ENCODE measurements at regions of chr5 and their contacts with region 1.

Region 1: GRCh38 chr5:43120720-43121564 is at the start of gene ZNF131:
- DNase-seq: peak; percentile 95 to 99 (median 97)
- ATAC-seq: peak; percentile 87
- H3K4me3 ChIP-seq: peak within 1 kb of the TSS; percentile 74 to 82
- H3K4me3 Mint-ChIP-seq: peak within 1 kb of the TSS; percentile 96
- H3K27ac ChIP-seq: peak within 1 kb of the TSS; percentile 87 to 98
- H3K27ac Mint-ChIP-seq: peak within 1 kb of the TSS; percentile 98
- H3K4me1 ChIP-seq: peaks cover 34% of the 10 kb centered on the region
- H3K4me1 Mint-ChIP-seq: peaks cover 39% of the 10 kb centered on the region
- H3K27me3 ChIP-seq: no peaks in the 10 kb centered on the region
- H3K27me3 Mint-ChIP-seq: no peaks in the 10 kb centered on the region
- CTCF ChIP-seq: no peak
- total RNA-seq, gene ZNF131: 76.7 to 84.9 TPM

Region 2: GRCh38 chr5:41869739-41870626 is 1251.0 kb before region 1 on chr5 and contains the start of gene OXCT1:
- CTCF ChIA-PET with region 1: no interaction called
- POLR2A ChIA-PET with region 1: interaction called, 4 read pairs
- intact Hi-C with region 1: loop called in 1 of 2 experiments (anchors 10 kb)
- DNase-seq: peak; percentile 87 to 97 (median 93)
- ATAC-seq: peak; percentile 94
- H3K4me3 ChIP-seq: peak within 1 kb of the TSS; percentile 90 to 98
- H3K4me3 Mint-ChIP-seq: peak within 1 kb of the TSS; percentile 92
- H3K27ac ChIP-seq: peak within 1 kb of the TSS; percentile 87 to 90
- H3K27ac Mint-ChIP-seq: peak within 1 kb of the TSS; percentile 98
- H3K4me1 ChIP-seq: peaks cover 24% of the 10 kb centered on the region
- H3K4me1 Mint-ChIP-seq: peaks cover 48% of the 10 kb centered on the region
- H3K27me3 ChIP-seq: no peaks in the 10 kb centered on the region
- H3K27me3 Mint-ChIP-seq: no peaks in the 10 kb centered on the region
- CTCF ChIP-seq: no peak
- total RNA-seq, gene OXCT1: 16.1 to 19.8 TPM

Region 3: GRCh38 chr5:42950440-42951292 is 170.3 kb before region 1 on chr5:
- CTCF ChIA-PET with region 1: interaction called, 7 read pairs
- POLR2A ChIA-PET with region 1: interaction called, 32 read pairs
- intact Hi-C with region 1: loop called (anchors 1 kb)
- DNase-seq: peak; percentile 26 to 90 (median 72)
- ATAC-seq: peak; percentile 43
- H3K4me3 ChIP-seq: peak overlapping the region; percentile 72 to 83
- H3K4me3 Mint-ChIP-seq: peak overlapping the region; percentile 94
- H3K27ac ChIP-seq: peak overlapping the region; percentile 93 to 94
- H3K27ac Mint-ChIP-seq: peak overlapping the region; percentile 99
- H3K4me1 ChIP-seq: peaks cover 20% of the 10 kb centered on the region
- H3K4me1 Mint-ChIP-seq: peaks cover 34% of the 10 kb centered on the region
- H3K27me3 ChIP-seq: no peaks in the 10 kb centered on the region
- H3K27me3 Mint-ChIP-seq: no peaks in the 10 kb centered on the region
- CTCF ChIP-seq: no peak

Region 4: GRCh38 chr5:43040287-43041098 is 80.4 kb before region 1 on chr5 and contains the start of gene ANXA2R:
- CTCF ChIA-PET with region 1: interaction called, 15 read pairs
- POLR2A ChIA-PET with region 1: interaction called, 47 read pairs
- intact Hi-C with region 1: loop called in 1 of 2 experiments (anchors 1 kb)
- DNase-seq: peak; percentile 88 to 98 (median 93)
- ATAC-seq: peak; percentile 58
- H3K4me3 ChIP-seq: peak within 1 kb of the TSS; percentile 86 to 87
- H3K4me3 Mint-ChIP-seq: peak within 1 kb of the TSS; percentile 93
- H3K27ac ChIP-seq: peak within 1 kb of the TSS; percentile 93 to 94
- H3K27ac Mint-ChIP-seq: peak within 1 kb of the TSS; percentile 98
- H3K4me1 ChIP-seq: peaks cover 27% of the 10 kb centered on the region
- H3K4me1 Mint-ChIP-seq: peaks cover 56% of the 10 kb centered on the region
- H3K27me3 ChIP-seq: no peaks in the 10 kb centered on the region
- H3K27me3 Mint-ChIP-seq: no peaks in the 10 kb centered on the region
- CTCF ChIP-seq: peak; percentile 79
- total RNA-seq, gene ANXA2R: 38.2 to 39.5 TPM

Region 5: DNA sequence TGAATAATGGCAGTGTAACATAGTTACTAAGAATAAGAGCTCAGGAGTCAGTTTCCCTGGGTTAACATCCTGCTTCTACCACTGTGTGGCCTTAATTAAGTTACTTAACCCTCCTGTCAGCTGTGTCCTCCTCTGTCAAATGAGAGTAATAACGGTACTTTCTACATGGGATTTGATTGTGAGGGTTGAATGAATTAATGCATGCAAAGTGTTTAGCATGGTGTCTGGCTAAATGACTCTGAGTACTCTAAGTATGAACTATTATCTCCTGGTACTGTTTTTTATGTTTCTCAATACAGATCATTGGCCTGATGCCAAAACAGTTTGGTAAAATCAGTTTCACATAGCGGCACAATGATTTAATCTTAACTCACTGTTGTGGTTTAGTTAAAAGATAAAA is 19.3 kb after region 1 on chr5:
- CTCF ChIA-PET with region 1: interaction called, 8 read pairs
- POLR2A ChIA-PET with region 1: interaction called, 20 read pairs
- intact Hi-C with region 1: no loop called
- DNase-seq: peak in 2 of 9 experiments; percentile 24 to 46
- ATAC-seq: peak; percentile 14
- H3K4me3 ChIP-seq: no peak overlapping the region
- H3K4me3 Mint-ChIP-seq: no peak overlapping the region
- H3K27ac ChIP-seq: peak overlapping the region in 1 of 2 experiments; percentile 46
- H3K27ac Mint-ChIP-seq: peak overlapping the region; percentile 6
- H3K4me1 ChIP-seq: peaks cover 16% of the 10 kb centered on the region
- H3K4me1 Mint-ChIP-seq: peaks cover 58% of the 10 kb centered on the region
- H3K27me3 ChIP-seq: no peaks in the 10 kb centered on the region
- H3K27me3 Mint-ChIP-seq: no peaks in the 10 kb centered on the region
- CTCF ChIP-seq: no peak

Region 6: DNA sequence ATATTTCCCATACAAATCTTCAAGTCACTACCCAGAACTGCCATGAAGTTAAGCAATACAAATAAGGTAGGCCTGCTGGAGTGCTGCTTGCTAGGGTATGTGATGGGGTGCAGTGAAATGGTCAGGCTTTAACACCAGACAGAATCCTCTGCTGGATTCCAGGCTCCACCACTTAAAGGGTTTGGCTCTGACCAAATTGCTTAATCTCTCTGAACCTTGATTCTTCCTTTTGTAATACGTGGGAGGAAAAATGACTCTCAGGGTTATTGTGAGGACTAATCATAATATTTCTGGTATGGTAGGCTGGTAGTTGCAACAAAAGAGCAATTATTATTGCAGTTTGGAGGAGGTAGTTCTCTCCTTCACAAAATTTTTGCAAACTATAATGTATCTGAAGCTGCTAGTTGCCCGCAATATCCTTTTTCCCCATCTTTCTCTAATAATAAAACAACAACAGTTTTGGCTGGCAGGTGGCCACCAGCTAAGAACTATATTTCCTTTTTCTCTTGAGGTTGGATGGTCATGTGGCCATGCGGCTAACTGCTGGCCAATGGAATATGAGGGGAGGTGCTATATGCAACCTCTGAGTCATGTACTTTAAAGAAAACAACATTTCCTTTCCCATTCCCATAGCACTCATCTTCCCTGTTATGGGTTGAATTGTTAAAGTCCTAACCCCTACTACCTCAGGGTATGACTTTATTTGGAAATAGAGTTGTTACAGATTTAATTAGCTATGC is 247.1 kb after region 1 on chr5:
- CTCF ChIA-PET with region 1: no interaction called
- POLR2A ChIA-PET with region 1: no interaction called
- intact Hi-C with region 1: no loop called
- DNase-seq: no peak
- ATAC-seq: no peak
- H3K4me3 ChIP-seq: no peak overlapping the region
- H3K4me3 Mint-ChIP-seq: no peak overlapping the region
- H3K27ac ChIP-seq: no peak overlapping the region
- H3K27ac Mint-ChIP-seq: no peak overlapping the region
- H3K4me1 ChIP-seq: no peaks in the 10 kb centered on the region
- H3K4me1 Mint-ChIP-seq: no peaks in the 10 kb centered on the region
- H3K27me3 ChIP-seq: no peaks in the 10 kb centered on the region
- H3K27me3 Mint-ChIP-seq: no peaks in the 10 kb centered on the region
- CTCF ChIP-seq: no peak

Region 7: GRCh38 chr5:43396762-43397304 is 275.9 kb after region 1 on chr5:
- CTCF ChIA-PET with region 1: no interaction called
- POLR2A ChIA-PET with region 1: interaction called, 14 read pairs
- intact Hi-C with region 1: loop called in 1 of 2 experiments (anchors 5 kb)
- DNase-seq: peak; percentile 40 to 80 (median 60)
- ATAC-seq: peak; percentile 93
- H3K4me3 ChIP-seq: peak overlapping the region; percentile 66 to 86
- H3K4me3 Mint-ChIP-seq: peak overlapping the region; percentile 94
- H3K27ac ChIP-seq: peak overlapping the region; percentile 77 to 78
- H3K27ac Mint-ChIP-seq: peak overlapping the region; percentile 96
- H3K4me1 ChIP-seq: peaks cover 18% of the 10 kb centered on the region
- H3K4me1 Mint-ChIP-seq: peaks cover 39% of the 10 kb centered on the region
- H3K27me3 ChIP-seq: no peaks in the 10 kb centered on the region
- H3K27me3 Mint-ChIP-seq: no peaks in the 10 kb centered on the region
- CTCF ChIP-seq: no peak

Measured in CD8-positive, alpha-beta T cell (primary cell).